MCF 10A (cell line): ENCODE measurements at regions of chr11 and their contacts with region 1.

Region 1: DNA sequence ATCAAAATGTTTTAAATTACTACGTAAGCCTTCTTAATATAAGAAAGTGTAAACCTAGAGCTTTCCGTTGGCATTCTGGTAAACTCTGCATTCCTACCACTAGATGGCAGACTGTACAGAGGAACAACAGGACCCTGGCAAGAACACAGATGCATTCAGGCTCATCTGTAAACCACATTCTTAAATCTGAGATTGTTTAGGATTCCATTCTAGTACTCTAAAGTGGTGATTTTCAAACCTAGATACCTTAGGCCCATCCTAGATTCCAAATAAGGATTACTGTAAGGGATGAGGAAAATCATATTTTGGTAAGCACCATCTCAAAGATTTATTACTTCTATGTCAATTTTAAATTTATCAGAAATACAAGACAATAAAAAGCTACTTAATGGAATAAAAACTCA is 26.9 kb downstream of the PICALM start:
- DNase-seq: peak; percentile 87
- H3K4me3 Mint-ChIP-seq: peak overlapping the region; percentile 2
- H3K27ac Mint-ChIP-seq: peak overlapping the region; percentile 55
- H3K4me1 Mint-ChIP-seq: peaks cover 39% of the 10 kb centered on the region
- H3K27me3 Mint-ChIP-seq: no peaks in the 10 kb centered on the region
- CTCF ChIP-seq: peak; percentile 78

Region 2: GRCh38 chr11:86052693-86053641 is 11.0 kb after region 1 on chr11:
- CTCF ChIA-PET with region 1: interaction called, 38 read pairs
- POLR2A ChIA-PET with region 1: no interaction called
- intact Hi-C with region 1: no loop called
- DNase-seq: no peak
- H3K4me3 Mint-ChIP-seq: no peak overlapping the region
- H3K27ac Mint-ChIP-seq: no peak overlapping the region
- H3K4me1 Mint-ChIP-seq: peaks cover 25% of the 10 kb centered on the region
- H3K27me3 Mint-ChIP-seq: no peaks in the 10 kb centered on the region
- CTCF ChIP-seq: no peak

Region 3: GRCh38 chr11:86156381-86156955 is 114.5 kb after region 1 on chr11:
- CTCF ChIA-PET with region 1: interaction called, 12 read pairs
- POLR2A ChIA-PET with region 1: interaction called, 3 read pairs
- intact Hi-C with region 1: no loop called
- DNase-seq: no peak
- H3K4me3 Mint-ChIP-seq: no peak overlapping the region
- H3K27ac Mint-ChIP-seq: no peak overlapping the region
- H3K4me1 Mint-ChIP-seq: peaks cover 24% of the 10 kb centered on the region
- H3K27me3 Mint-ChIP-seq: no peaks in the 10 kb centered on the region
- CTCF ChIP-seq: no peak

Region 4: GRCh38 chr11:86211619-86212018 is 169.6 kb after region 1 on chr11:
- CTCF ChIA-PET with region 1: interaction called, 12 read pairs
- POLR2A ChIA-PET with region 1: interaction called, 3 read pairs
- intact Hi-C with region 1: no loop called
- DNase-seq: peak; percentile 38
- H3K4me3 Mint-ChIP-seq: no peak overlapping the region
- H3K27ac Mint-ChIP-seq: no peak overlapping the region
- H3K4me1 Mint-ChIP-seq: peaks cover 7% of the 10 kb centered on the region
- H3K27me3 Mint-ChIP-seq: no peaks in the 10 kb centered on the region
- CTCF ChIP-seq: no peak

Region 5: DNA sequence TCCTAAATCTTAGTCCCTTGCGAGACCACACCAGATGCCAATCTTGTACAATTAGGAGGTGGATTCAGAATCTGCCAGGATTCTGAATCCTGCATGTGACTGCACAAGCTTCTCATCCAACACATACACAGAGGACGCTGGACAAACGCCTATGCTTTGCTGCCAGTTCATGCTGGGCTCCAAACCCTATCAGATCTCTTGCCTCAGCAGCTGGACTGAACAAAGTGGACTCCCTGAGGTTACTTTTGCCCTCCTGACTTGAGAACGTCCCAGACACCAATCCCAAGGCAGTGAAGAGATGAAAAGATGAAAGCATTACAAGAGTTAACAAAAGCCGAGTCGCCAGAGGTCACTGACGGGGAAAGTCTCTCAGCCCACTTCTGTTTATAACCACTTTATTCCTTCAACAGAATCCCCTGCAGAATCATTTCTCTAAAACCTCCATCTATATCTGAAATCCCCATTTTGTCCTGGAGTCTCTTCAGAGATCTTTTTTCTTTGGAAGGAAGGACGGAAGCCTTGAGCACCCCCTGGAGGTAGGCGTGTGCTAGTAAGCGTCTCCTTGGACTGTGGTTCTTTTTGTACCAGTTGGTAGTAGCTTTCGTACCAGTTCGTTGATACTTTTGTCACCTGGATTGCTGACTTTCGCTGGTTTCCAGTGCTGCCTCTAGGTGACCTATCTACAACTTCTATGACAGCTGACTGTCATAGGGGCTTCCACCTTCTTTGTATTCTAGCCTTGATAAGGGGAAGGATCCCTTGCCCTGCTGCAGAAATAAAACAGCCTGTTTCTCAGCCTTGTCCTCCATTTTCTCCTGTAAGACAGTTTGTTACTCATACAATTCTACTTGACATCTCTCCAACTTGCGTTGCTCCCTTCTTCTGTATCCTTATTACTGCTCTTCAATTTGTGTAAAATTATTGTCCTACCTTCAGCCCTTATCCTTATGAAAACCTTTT is 176.4 kb after region 1 on chr11:
- CTCF ChIA-PET with region 1: interaction called, 17 read pairs
- POLR2A ChIA-PET with region 1: interaction called, 3 read pairs
- intact Hi-C with region 1: loop called (anchors 1 kb)
- DNase-seq: peak; percentile 79
- H3K4me3 Mint-ChIP-seq: no peak overlapping the region
- H3K27ac Mint-ChIP-seq: no peak overlapping the region
- H3K4me1 Mint-ChIP-seq: peaks cover 6% of the 10 kb centered on the region
- H3K27me3 Mint-ChIP-seq: no peaks in the 10 kb centered on the region
- CTCF ChIP-seq: peak; percentile 81

Region 6: GRCh38 chr11:86291466-86292262 is 249.7 kb after region 1 on chr11:
- CTCF ChIA-PET with region 1: interaction called, 3 read pairs
- POLR2A ChIA-PET with region 1: no interaction called
- intact Hi-C with region 1: loop called (anchors 2 kb)
- DNase-seq: peak; percentile 77
- H3K4me3 Mint-ChIP-seq: no peak overlapping the region
- H3K27ac Mint-ChIP-seq: no peak overlapping the region
- H3K4me1 Mint-ChIP-seq: peaks cover 6% of the 10 kb centered on the region
- H3K27me3 Mint-ChIP-seq: no peaks in the 10 kb centered on the region
- CTCF ChIP-seq: peak; percentile 78